ENCODE measurements at regions of chr2 and their contacts with region 1.

Region 1: GRCh38 chr2:231900972-231901371 is 25.2 kb downstream of the NPPC start:
- DNase-seq: peak in 2 of 10 donors; percentile 26 to 70

Region 2: GRCh38 chr2:232174662-232175061 is 273.7 kb after region 1 on chr2:
- intact Hi-C with region 1: no loop called
- DNase-seq: no peak

Region 3: GRCh38 chr2:232327105-232328041 is 426.4 kb after region 1 on chr2:
- intact Hi-C with region 1: loop called (anchors 5 kb)
- DNase-seq: peak in 9 of 10 donors; percentile 61 to 97 (median 81)

Region 4: GRCh38 chr2:232438951-232439757 is 538.2 kb after region 1 on chr2:
- intact Hi-C with region 1: loop called (anchors 1 kb)
- DNase-seq: peak in 5 of 10 donors; percentile 30 to 84 (median 77)

Region 5: GRCh38 chr2:232521959-232522622 is 621.1 kb after region 1 on chr2:
- intact Hi-C with region 1: loop called (anchors 5 kb)
- DNase-seq: peak in 6 of 10 donors; percentile 60 to 95 (median 72)